Posterior cingulate gyrus (tissue), 11 donors: ENCODE measurements at regions of chr18 and their contacts with region 1.

Region 1: DNA sequence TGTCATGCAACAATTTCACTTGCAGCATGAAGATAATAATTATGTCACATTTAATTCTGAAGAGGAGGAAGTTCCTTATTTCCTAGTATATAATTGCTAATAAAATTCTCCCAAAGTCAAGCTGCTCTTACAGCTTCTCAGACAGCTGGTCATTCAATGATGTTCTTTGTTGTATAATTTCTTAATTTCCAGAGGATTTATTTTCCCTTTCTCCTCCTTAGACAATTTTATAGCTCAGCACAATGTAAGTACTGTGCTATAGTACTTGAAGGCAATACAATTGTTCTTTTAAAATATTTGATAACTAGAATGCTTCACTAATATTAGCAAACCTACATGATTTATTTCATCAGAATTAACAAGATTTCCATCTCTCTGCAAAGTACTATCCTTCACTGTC is 73.4 kb downstream of the ROCK1 start:
- DNase-seq: no peak

Region 2: DNA sequence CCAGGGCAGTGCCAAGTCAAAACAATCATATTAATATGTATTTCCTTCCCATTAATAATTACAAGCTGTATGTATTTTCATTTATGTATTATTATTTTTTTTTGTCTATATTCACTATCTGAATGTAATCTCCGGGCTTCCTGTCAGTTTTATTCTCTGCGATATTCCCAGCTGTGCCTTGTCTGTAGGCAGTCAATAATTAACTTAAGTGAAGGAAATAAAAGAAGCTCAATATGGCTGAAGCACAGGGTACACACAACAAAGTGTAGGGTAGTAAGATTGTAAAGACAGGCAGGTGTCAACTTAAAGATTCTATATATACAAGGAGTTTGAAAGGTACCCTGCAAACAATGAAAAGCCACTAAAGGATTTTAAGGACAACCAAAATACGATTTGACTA is 49.5 kb before region 1 on chr18:
- intact Hi-C with region 1: no loop called
- DNase-seq: no peak

Region 3: DNA sequence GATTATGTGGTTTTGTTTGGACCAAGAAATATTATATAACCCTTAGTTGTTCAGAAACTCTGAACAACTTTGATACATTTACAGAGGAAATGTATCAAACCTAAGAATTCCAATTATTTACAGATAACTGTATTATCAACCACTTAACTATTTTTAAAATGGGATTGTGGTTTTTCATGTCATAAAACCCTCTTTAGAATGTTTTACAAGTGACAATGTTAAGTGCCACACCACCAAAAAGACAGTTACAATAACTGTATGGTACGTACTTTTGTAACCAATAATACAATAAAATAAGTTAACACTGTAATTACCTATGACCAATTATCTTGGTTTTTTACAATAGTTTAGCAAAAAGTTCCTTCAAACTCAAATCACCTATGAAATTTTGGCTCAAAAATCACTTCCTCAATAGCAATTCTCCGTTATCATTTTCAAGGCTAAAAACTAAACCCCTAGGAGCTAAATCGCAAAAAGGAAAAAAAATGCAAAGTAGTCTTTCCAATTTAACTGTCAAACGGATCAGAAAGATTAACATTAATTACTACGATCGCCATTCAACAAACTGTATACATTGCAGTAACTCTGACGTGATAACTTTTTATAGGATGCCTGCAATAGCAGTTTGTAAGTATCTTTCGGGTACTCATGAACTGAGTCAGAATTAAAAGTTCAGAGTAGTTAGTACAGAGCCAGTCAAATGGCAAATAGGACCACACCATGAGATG is 71.9 kb after region 1 on chr18:
- intact Hi-C with region 1: loop called (anchors 10 kb)
- DNase-seq: no peak

Region 4: DNA sequence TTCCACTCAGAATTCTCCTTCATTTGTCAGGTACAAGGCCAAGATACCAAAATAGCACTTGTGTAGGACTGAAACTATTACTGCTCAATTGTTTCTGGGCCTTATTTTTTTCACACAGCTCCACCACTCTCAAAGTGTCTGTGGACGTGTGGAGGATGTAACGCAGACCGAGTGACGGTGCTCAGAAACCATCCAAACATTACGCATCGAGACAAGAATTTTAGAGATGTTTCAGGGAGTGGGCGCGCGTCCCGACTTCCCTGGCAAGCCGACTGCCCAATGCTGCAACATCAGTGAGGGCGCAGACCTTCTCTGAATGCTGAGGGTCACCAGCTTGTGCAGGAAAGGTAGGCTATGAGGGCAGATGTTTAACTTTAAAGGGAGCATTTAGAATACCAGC is 1239.6 kb after region 1 on chr18:
- intact Hi-C with region 1: no loop called
- DNase-seq: no peak